A673 (cell line): ENCODE measurements at regions of chr13 and their contacts with region 1.

Region 1: DNA sequence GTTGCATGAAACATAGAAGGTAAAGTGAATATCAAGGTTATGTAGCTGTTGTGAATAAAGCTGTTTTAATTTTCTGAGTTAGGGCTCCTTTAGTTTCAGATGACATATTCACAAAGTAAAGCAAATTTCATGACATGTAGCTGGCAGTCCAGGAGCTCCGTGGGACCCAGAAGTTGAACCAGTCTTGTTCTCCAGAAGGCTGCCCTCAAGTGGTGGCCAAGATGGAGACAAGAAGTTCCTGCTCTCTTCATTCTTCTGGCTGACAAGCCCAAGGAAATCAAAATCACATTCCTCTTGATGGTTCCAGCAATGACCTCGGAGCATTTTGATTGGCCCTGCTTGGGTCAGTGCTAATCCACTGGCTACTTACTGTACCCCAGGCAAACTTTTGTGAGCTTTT is 128.7 kb downstream of the LIG4 start:
- DNase-seq: peak; percentile 64
- H3K4me3 ChIP-seq: no peak overlapping the region
- H3K27ac ChIP-seq: no peak overlapping the region
- H3K4me1 ChIP-seq: no peaks in the 10 kb centered on the region
- H3K27me3 ChIP-seq: no peaks in the 10 kb centered on the region
- CTCF ChIP-seq: peak; percentile 57

Region 2: DNA sequence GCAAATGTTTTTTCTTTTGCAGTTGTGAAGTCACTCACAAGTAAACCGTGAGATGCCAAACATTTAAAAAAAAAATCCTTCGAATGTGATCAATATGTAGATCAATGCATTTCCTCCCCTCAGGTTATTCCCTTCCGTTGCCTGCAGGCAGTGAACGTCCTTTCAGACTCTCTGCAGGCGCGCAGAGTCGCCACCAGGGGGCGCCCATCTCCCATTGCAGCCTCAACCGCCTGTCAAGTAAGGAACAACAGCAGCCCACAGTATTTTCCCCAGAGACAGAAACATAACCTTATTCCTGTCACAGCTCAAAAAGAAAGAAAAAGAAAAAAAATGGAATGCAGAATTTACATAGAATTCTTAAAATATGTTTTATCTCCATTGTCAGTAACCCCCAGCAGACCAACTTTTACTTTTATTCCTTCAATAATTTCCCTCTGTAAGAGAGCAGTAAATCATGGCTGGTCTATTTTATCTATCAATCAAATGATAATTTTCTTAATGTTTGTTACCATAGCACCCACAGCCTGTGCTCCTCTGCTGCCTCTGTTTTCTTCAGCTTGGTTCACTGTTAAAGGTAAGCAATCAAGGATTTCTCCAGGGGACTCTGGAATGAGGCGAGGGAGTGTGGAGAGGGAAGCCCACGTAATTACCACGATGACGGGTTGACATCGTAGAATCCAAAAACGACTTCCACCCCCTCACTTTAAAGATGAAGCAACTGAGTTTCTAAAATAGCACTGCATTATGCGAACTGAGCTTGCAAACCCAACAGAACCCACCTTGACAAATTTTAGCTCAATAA is 881.2 kb before region 1 on chr13:
- CTCF ChIA-PET with region 1: no interaction called
- POLR2A ChIA-PET with region 1: no interaction called
- intact Hi-C with region 1: loop called (anchors 5 kb)
- DNase-seq: peak; percentile 76
- H3K4me3 ChIP-seq: no peak overlapping the region
- H3K27ac ChIP-seq: no peak overlapping the region
- H3K4me1 ChIP-seq: peaks cover 14% of the 10 kb centered on the region
- H3K27me3 ChIP-seq: no peaks in the 10 kb centered on the region
- CTCF ChIP-seq: peak; percentile 98

Region 3: GRCh38 chr13:107824635-107825034 is 262.0 kb before region 1 on chr13:
- CTCF ChIA-PET with region 1: no interaction called
- POLR2A ChIA-PET with region 1: no interaction called
- intact Hi-C with region 1: no loop called
- DNase-seq: no peak
- H3K4me3 ChIP-seq: no peak overlapping the region
- H3K27ac ChIP-seq: no peak overlapping the region
- H3K4me1 ChIP-seq: no peaks in the 10 kb centered on the region
- H3K27me3 ChIP-seq: no peaks in the 10 kb centered on the region
- CTCF ChIP-seq: no peak